ENCODE measurements at regions of chr2 and their contacts with region 1.

Region 1: DNA sequence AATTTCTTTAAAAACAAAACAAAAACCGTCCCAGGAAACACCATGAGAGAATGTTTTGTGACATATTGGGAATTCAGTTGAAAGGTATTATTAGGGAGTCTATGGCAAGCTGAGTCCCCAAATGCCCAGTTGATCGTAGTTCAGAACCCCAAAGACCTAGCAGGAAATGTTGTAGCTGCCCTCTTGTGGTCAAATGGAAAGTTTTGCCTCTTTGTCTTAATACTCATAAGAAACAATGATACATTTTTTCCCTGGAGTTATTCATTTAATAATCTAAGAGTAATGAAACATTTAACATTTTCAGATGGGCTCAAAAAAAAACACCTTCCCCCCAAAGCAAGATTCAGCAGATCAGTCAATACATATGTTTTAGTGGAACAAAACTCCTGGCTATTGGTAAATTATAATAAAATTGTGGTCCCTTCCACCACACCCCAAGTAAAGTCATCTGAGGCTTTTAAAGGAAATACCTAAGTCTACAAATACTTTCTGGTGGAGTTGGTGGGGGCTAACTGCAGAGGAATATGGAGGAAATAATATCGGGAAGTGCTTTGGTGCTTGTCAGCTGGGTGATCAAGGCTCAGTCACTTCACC is 37.8 kb upstream of the EFEMP1 start:
- DNase-seq: no peak
- ATAC-seq: peak; percentile 52 to 59 (median 54)
- H3K4me3 ChIP-seq: no peak overlapping the region
- H3K27ac ChIP-seq: no peak overlapping the region
- H3K4me1 ChIP-seq: no peaks in the 10 kb centered on the region
- H3K27me3 ChIP-seq: no peaks in the 10 kb centered on the region
- CTCF ChIP-seq: peak; percentile 54 to 64 (median 58)
- POLR2A ChIP-seq: no peak

Region 2: GRCh38 chr2:55761526-55761925 is 199.9 kb before region 1 on chr2:
- intact Hi-C with region 1: loop called in 1 of 2 experiments (anchors 10 kb)
- DNase-seq: no peak
- ATAC-seq: no peak
- H3K4me3 ChIP-seq: no peak overlapping the region
- H3K27ac ChIP-seq: no peak overlapping the region
- H3K4me1 ChIP-seq: no peaks in the 10 kb centered on the region
- H3K27me3 ChIP-seq: no peaks in the 10 kb centered on the region
- CTCF ChIP-seq: no peak
- POLR2A ChIP-seq: no peak

Region 3: DNA sequence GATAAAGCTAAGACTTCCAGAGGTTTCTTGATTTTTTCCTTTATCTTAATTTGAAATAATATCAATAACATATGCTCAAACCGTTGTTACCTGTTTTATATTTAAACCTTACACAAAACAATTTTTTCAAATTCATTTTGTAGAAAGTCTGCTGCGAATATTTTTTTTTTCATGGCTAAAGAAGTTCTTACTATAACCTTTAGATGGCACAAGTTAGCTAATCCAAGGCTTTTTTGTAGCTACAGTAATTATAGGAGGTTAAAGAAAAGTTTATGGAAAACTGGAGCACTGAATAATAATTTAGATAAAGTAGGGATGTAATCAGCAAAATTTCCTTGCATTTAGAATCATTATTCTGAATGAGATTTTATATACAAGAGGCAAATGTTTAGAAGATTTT is 189.8 kb before region 1 on chr2:
- intact Hi-C with region 1: loop called (anchors 10 kb)
- DNase-seq: no peak
- ATAC-seq: peak in 2 of 4 donors; percentile 36 to 49
- H3K4me3 ChIP-seq: no peak overlapping the region
- H3K27ac ChIP-seq: no peak overlapping the region
- H3K4me1 ChIP-seq: no peaks in the 10 kb centered on the region
- H3K27me3 ChIP-seq: no peaks in the 10 kb centered on the region
- CTCF ChIP-seq: peak; percentile 54 to 71 (median 59)
- POLR2A ChIP-seq: no peak

Measured in right lobe of liver (tissue), 6 donors.